ENCODE measurements at regions of chr20 and their contacts with region 1.

Region 1: GRCh38 chr20:63009045-63009961 is 2.5 kb upstream of the BHLHE23 start:
- DNase-seq: peak; percentile 84
- H3K4me3 ChIP-seq: no peak overlapping the region
- H3K27ac ChIP-seq: no peak overlapping the region
- H3K4me1 ChIP-seq: peaks cover 0 to 19% (median 18%) of the 10 kb centered on the region in 4 donors
- H3K27me3 ChIP-seq: peaks cover 100% of the 10 kb centered on the region
- CTCF ChIP-seq: peak; percentile 91 to 95 (median 93)
- EP300 ChIP-seq: no peak
- POLR2A ChIP-seq: no peak

Region 2: DNA sequence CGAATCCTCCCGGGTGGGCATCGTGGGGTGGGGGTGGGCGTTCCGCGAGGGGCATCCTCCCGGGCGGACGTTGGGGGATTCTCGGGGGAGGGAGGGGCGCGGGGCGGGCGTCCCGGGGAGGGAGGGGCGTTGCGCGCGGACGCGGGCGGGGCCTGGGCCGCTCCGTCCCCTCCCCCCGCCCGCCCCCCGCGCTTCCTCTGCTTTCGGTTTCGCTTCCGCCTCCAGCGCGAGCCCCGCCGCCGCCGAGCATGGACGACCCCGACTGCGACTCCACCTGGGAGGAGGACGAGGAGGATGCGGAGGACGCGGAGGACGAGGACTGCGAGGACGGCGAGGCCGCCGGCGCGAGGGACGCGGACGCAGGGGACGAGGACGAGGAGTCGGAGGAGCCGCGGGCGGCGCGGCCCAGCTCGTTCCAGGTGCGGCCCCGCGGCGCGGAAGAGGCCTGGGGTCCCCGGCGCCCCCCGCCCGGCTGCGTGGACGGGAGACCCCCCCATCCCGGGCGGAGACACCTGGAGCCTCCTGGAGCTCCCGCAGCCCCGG is 204.6 kb before region 1 on chr20 and contains the start of gene OGFR:
- in situ Hi-C with region 1: no loop called
- intact Hi-C with region 1: no loop called
- DNase-seq: peak; percentile 78
- H3K4me3 ChIP-seq: peak within 1 kb of the TSS; percentile 88 to 100 (median 96)
- H3K27ac ChIP-seq: peak within 1 kb of the TSS; percentile 90 to 94 (median 94)
- H3K4me1 ChIP-seq: peaks cover 17 to 30% (median 22%) of the 10 kb centered on the region in 4 donors
- H3K27me3 ChIP-seq: no peaks in the 10 kb centered on the region
- CTCF ChIP-seq: no peak
- EP300 ChIP-seq: no peak
- POLR2A ChIP-seq: peak; percentile 49
- total RNA-seq, gene OGFR: 55.2 to 137 (median 71.1) TPM

Region 3: GRCh38 chr20:62875419-62876361 is 133.6 kb before region 1 on chr20:
- in situ Hi-C with region 1: loop called in 2 of 4 experiments (anchors 25 kb)
- intact Hi-C with region 1: no loop called
- DNase-seq: peak; percentile 78
- H3K4me3 ChIP-seq: no peak overlapping the region
- H3K27ac ChIP-seq: peak overlapping the region; percentile 55 to 86 (median 72)
- H3K4me1 ChIP-seq: peaks cover 8 to 25% (median 10%) of the 10 kb centered on the region in 4 donors
- H3K27me3 ChIP-seq: no peaks in the 10 kb centered on the region
- CTCF ChIP-seq: peak; percentile 23 to 50 (median 49)
- EP300 ChIP-seq: no peak
- POLR2A ChIP-seq: no peak

Region 4: GRCh38 chr20:62891111-62891510 is 118.2 kb before region 1 on chr20:
- in situ Hi-C with region 1: loop called in 3 of 4 experiments (anchors 5 to 25 kb)
- intact Hi-C with region 1: no loop called
- DNase-seq: no peak
- H3K4me3 ChIP-seq: no peak overlapping the region
- H3K27ac ChIP-seq: no peak overlapping the region
- H3K4me1 ChIP-seq: peaks cover 4 to 12% (median 7%) of the 10 kb centered on the region in 4 donors
- H3K27me3 ChIP-seq: no peaks in the 10 kb centered on the region
- CTCF ChIP-seq: no peak
- EP300 ChIP-seq: no peak
- POLR2A ChIP-seq: no peak

Region 5: DNA sequence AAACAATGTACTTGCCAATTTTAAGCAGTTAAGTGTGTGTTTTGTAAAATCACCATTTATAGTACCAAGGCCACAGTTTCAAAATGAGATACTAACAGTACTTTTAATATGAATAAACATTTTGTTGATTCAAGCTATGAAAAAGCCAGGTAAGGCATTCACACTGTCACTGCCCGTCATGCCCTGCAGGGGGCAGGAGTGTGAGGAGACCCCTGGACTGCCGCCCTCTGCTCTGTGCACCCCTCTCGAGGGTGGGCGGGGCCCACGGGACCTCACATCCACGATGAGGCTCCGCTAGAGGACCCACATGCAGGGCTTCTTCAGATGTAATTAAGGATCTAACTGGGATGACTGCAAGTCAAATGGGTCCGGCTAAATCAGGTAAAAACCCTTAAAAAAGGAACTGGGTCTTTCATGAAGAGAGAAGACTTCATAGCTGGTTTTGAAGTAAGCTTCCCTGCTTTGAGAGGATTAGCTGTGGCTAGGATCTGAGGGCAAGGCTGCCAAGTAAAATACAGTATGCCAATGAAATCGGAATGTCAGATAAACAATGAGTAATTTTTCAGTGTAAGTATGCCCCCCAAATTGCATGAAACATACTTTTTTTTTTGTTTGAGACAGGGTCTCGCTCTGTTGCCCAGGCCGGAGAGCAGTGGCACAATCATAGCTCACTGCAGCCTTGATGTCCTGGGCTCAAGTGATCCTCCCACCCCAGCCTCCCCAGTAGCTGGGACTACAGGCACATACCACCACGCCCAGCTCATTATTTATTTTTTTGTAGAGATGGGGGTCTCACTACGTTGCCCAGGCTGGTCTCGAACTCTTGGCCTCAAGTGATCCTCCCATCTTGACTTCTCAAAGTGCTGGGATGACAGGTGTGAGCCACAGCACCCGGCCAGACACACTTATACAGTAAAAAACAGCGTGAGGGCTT is 101.7 kb before region 1 on chr20:
- in situ Hi-C with region 1: no loop called
- intact Hi-C with region 1: loop called (anchors 5 kb)
- DNase-seq: no peak
- H3K4me3 ChIP-seq: no peak overlapping the region
- H3K27ac ChIP-seq: no peak overlapping the region
- H3K4me1 ChIP-seq: no peaks in the 10 kb centered on the region
- H3K27me3 ChIP-seq: no peaks in the 10 kb centered on the region
- CTCF ChIP-seq: peak; percentile 16 to 39 (median 37)
- EP300 ChIP-seq: no peak
- POLR2A ChIP-seq: no peak

Region 6: DNA sequence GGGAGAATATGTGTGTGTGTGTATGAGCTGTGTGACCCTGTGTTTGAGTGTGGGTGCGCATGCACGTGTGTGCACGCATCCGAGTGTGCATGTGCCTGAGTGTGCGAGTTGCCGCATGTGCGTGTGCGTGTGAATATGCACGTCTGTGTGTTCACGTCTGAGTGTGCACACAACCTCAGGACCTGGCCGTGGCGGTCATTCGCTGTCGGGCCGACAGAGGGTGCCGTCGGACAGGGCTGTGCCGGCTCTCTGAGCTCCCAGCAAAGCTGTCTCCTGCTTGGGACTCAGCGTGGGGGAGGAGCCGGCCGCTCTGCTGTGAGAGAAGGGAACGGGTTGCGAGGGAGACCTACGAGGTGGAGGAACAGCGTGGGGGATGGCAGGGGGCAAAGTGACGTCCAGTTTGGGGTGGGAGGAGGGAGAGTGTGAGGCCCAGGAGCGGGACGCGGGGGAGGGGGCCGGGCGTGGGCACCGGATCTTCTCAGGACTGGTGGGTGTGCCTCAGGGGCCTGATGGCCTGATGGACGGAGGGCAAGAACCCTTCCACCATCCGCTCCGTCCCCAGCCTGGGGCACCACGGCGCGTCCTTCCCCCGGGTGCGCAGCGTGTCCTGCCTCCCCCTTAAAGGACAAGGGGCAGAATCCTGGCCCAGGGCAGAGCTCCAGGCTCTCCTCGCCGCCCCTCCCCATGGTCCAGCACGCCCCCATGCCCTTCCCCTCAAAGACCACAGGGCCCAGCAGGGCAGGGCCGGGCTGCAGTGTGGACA is 36.9 kb before region 1 on chr20:
- in situ Hi-C with region 1: no loop called
- intact Hi-C with region 1: loop called (anchors 2 kb)
- DNase-seq: peak; percentile 89
- H3K4me3 ChIP-seq: peak overlapping the region in 2 of 4 donors; percentile 7 to 16
- H3K27ac ChIP-seq: no peak overlapping the region
- H3K4me1 ChIP-seq: peaks cover 6 to 11% (median 7%) of the 10 kb centered on the region in 4 donors
- H3K27me3 ChIP-seq: peaks cover 71% of the 10 kb centered on the region
- CTCF ChIP-seq: peak; percentile 83 to 93 (median 89)
- EP300 ChIP-seq: no peak
- POLR2A ChIP-seq: no peak

Region 7: DNA sequence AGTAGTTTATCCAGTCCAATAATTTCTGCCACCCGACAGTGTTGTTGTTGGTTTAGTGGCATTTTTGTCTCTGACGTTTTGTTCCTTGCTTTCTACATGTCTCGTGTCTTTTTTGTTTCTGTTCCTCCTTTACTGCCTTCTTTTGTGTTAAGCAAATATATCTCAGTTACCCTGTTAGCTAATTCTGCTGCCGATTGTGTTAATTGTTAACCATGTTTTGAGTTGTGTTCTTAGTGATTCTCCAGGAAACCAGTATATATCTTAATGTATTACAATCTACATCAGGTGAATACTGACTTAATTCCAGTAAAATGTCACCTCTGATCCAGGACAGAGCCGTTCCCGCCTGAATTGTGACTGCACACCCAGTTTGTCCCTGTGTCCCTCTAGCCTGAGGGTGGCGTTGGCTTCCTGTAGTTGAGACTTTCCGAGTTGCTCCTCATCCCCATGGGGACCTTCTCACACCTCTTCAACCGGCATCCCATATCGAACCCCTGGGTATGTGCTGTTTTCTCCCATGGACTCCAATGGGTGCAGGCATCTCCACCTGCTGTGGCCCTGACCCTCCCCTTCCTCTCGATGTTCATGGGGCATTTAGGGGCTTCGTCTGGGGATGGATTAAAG is 33.3 kb after region 1 on chr20:
- in situ Hi-C with region 1: no loop called
- intact Hi-C with region 1: no loop called
- DNase-seq: no peak
- H3K4me3 ChIP-seq: no peak overlapping the region
- H3K27ac ChIP-seq: no peak overlapping the region
- H3K4me1 ChIP-seq: no peaks in the 10 kb centered on the region
- H3K27me3 ChIP-seq: peaks cover 55% of the 10 kb centered on the region
- CTCF ChIP-seq: no peak
- EP300 ChIP-seq: no peak
- POLR2A ChIP-seq: no peak